Activated CD8-positive, alpha-beta T cell treated with anti-CD3 and anti-CD28 coated beads, Interleukin-2, amount 10 ng/mL, durations not matched to agents 7 days and 5 days (primary cell): ENCODE measurements at regions of chr13 and their contacts with region 1.

Region 1: GRCh38 chr13:40777166-40777808 is 6.3 kb upstream of the MRPS31 start:
- DNase-seq: peak; percentile 68
- ATAC-seq: peak; percentile 73
- H3K4me3 Mint-ChIP-seq: peak overlapping the region; percentile 72
- H3K27ac Mint-ChIP-seq: peak overlapping the region; percentile 100
- H3K4me1 Mint-ChIP-seq: peaks cover 35% of the 10 kb centered on the region
- H3K27me3 Mint-ChIP-seq: no peaks in the 10 kb centered on the region

Region 2: DNA sequence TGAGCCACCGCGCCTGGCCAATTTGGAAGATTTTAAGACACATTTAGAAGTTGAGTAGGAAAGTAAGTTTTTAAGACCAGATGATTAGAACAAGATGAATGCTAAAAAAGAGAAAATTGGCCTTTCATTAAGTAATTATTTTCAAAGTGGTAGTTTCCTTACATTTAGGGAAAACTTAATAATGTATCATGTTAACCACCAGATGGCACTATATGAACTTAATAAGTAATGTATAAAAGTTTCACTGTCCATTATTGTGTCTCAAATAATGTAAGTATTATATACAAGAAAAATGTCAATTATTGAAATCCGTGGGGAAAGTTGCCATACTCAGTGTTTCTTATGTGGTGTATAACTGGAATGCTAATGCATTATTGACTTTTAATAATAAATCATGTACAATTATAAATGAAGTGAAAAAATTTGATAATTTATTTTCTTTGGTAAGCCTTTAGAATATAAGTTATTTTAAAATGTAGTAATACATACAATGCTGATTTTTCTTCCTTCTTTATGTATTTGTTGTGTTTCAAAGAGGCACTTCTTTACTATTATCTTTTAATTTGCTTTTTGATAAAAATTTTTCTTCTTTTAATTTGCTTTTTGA is 1092.7 kb before region 1 on chr13:
- CTCF ChIA-PET with region 1: interaction called, 10 read pairs
- POLR2A ChIA-PET with region 1: no interaction called
- DNase-seq: no peak
- ATAC-seq: no peak
- H3K4me3 Mint-ChIP-seq: no peak overlapping the region
- H3K27ac Mint-ChIP-seq: no peak overlapping the region
- H3K4me1 Mint-ChIP-seq: peaks cover 22% of the 10 kb centered on the region
- H3K27me3 Mint-ChIP-seq: no peaks in the 10 kb centered on the region

Region 3: DNA sequence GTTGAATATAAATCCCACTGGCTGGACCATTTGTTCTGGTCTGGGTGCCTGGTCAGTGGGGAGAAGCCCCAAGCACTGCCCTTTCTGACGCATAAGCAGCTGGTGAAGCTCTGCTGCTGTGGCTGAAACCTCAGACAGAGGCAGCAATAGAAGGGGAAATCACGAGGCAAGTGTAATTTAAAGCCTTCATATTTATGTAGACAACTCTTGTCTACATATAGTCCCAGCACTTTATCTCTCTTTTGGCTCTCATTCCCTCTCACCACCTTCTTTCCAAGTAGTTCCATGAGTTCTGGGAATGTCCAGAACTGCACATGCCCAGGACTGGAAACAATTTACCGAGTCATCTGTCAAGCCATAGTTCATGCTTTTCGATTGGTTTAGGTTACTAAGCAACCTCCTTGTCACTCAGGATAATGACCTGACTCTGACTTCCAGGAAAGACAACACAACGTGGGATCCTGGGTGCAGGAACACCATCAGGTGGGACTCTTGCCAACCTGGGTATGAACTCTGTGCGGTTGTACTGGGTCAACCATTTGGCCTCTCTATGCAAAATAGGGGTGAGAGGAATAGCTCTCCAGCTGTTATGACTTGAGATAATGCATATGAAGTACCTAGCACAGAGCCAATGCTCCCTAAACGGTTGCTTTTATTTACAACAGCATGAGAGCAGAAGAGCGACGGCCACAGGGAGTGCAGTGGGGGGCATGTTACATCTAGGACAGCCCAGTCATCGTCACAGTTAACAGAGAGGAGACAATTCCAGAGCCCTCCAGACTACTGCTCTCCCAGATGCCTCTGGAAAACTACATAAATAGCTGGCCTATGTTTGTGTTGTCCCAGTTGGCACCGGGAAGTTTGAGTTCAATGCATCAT is 432.8 kb before region 1 on chr13:
- CTCF ChIA-PET with region 1: no interaction called
- POLR2A ChIA-PET with region 1: no interaction called
- DNase-seq: no peak
- ATAC-seq: no peak
- H3K4me3 Mint-ChIP-seq: no peak overlapping the region
- H3K27ac Mint-ChIP-seq: no peak overlapping the region
- H3K4me1 Mint-ChIP-seq: no peaks in the 10 kb centered on the region
- H3K27me3 Mint-ChIP-seq: no peaks in the 10 kb centered on the region

Region 4: DNA sequence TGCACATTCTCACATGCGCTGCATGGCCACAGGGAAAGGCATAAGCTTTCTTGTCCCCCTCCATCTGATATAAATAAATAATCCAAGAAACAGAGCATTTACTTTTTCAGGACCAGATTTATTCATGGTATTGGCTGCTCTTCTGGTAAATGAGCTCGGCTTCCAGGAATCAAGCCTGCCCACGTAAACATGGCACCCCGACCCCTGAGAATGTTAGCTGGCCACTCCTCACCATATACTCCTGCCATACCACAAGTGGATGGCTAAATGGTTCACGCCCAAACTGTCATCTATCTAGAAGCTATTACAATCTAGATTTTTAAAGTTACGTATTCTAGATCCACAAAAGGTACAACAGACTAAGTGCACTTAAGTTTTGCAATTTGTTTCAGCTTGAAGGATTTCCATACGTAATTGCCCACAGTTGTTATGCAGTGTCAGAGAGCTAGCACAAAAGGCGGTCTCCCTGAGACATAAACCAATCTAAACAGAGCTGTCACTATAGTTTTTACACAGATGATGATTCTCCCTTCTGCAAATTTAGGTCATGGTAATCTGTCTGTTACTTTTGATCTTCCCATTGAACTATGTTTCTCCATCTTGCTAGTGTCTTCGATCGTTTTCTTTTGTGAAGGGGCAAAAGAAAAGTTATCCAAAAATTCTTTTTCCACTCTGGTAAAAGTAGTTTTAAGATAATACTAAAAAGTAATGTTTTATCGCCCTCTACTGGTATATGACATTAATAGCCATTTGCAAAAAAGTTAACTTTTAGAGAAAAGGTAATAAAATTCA is 94.6 kb before region 1 on chr13:
- CTCF ChIA-PET with region 1: interaction called, 15 read pairs
- POLR2A ChIA-PET with region 1: no interaction called
- DNase-seq: no peak
- ATAC-seq: no peak
- H3K4me3 Mint-ChIP-seq: no peak overlapping the region
- H3K27ac Mint-ChIP-seq: peak overlapping the region; percentile 14
- H3K4me1 Mint-ChIP-seq: peaks cover 7% of the 10 kb centered on the region
- H3K27me3 Mint-ChIP-seq: no peaks in the 10 kb centered on the region

Region 5: DNA sequence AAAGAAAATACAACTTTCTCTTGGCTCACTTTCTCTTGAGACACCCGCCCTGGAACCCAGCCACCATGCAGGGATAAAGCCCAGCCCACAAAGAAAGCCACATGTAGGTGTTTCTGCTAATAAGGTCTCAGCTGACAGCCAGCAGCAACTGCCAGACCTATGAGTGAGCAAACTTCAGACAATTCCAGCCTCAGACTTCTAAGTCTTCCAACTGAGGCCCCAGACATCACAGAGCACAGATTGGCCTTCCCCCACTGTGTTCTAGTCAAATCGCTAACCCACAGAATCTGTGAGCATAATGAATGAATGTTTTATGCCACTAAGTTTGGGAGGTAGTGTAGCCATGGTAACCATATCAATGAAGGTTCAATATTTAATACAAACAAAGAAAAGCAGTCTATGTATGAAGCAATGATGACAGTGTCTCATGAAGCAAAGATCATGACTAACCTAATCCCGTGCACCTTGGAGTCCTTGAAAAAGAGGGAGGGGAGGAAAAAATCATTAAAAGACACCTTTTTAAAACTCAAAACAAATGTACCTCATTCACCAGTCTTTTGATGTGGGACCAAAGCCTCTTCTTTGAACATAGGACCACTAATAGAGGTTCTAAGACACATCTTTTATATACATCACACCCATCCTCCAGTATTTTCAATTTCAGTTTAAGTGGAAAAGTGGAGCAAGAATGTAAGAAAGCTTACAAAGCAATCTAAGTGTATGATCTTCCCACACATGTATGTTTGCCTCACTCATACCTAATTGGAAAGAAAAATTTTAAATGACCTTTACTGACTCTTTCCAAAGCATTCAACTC is 12.5 kb before region 1 on chr13:
- CTCF ChIA-PET with region 1: interaction called, 42 read pairs
- POLR2A ChIA-PET with region 1: no interaction called
- DNase-seq: no peak
- ATAC-seq: peak; percentile 85
- H3K4me3 Mint-ChIP-seq: no peak overlapping the region
- H3K27ac Mint-ChIP-seq: peak overlapping the region; percentile 49
- H3K4me1 Mint-ChIP-seq: peaks cover 47% of the 10 kb centered on the region
- H3K27me3 Mint-ChIP-seq: no peaks in the 10 kb centered on the region

Region 6: DNA sequence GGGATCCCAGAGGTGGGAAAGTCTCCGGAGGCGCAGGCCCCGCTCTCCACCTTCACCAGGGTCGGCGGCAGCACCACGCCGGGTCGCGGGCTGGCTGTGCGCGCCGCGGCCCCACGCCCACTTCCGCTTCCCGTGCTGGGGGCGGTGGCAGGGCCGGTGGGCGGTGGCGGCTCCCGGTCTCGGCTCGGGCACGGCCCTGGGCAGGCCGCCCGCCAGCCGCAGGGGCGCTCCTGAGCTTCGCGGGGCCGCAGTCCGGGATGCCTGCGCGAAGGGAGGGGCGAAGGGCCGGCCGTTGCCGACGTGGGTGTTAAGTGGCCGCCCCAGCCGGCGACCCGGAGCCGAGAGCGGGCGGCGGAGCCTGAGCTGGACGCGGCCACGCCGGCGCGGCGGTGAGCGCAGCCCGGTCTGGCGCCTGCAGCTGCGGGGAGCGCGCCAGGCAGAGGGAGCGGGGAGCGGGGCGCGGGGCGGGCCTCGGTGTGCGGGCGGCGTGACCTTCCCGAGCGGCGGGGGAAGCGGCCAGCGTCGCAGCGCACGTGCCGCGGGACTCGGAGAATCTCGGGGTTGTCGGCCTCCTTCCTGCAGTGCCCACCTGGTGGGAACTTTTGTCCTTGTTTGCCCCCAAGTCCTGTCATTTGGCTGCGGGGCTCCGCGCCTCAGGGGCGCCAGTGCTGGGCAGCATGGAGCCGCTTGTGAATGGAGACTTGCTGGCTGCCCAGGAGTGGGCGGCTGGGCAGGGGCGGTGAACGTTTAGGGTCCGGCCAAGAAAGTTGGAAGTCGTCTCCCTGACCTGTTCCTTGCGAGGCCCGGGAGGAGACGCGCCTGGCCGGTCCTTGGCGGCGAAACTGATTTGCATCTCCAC is 12.2 kb after region 1 on chr13 and contains the start of gene SLC25A15:
- CTCF ChIA-PET with region 1: interaction called, 24 read pairs
- POLR2A ChIA-PET with region 1: interaction called, 5 read pairs
- DNase-seq: peak; percentile 77
- ATAC-seq: peak; percentile 94
- H3K4me3 Mint-ChIP-seq: peak within 1 kb of the TSS; percentile 79
- H3K27ac Mint-ChIP-seq: peak within 1 kb of the TSS; percentile 77
- H3K4me1 Mint-ChIP-seq: peaks cover 50% of the 10 kb centered on the region
- H3K27me3 Mint-ChIP-seq: no peaks in the 10 kb centered on the region
- total RNA-seq, gene SLC25A15: 13.4 to 13.5 TPM

Region 7: GRCh38 chr13:40813661-40814454 is 36.6 kb after region 1 on chr13:
- CTCF ChIA-PET with region 1: interaction called, 16 read pairs
- POLR2A ChIA-PET with region 1: no interaction called
- DNase-seq: peak; percentile 25
- ATAC-seq: peak; percentile 75
- H3K4me3 Mint-ChIP-seq: no peak overlapping the region
- H3K27ac Mint-ChIP-seq: no peak overlapping the region
- H3K4me1 Mint-ChIP-seq: peaks cover 3% of the 10 kb centered on the region
- H3K27me3 Mint-ChIP-seq: no peaks in the 10 kb centered on the region

Region 8: GRCh38 chr13:41111454-41111853 is 334.2 kb after region 1 on chr13:
- CTCF ChIA-PET with region 1: no interaction called
- POLR2A ChIA-PET with region 1: no interaction called
- DNase-seq: no peak
- ATAC-seq: no peak
- H3K4me3 Mint-ChIP-seq: no peak overlapping the region
- H3K27ac Mint-ChIP-seq: no peak overlapping the region
- H3K4me1 Mint-ChIP-seq: no peaks in the 10 kb centered on the region
- H3K27me3 Mint-ChIP-seq: no peaks in the 10 kb centered on the region